Heart left ventricle (tissue), 16 donors: ENCODE measurements at regions of chr9 and their contacts with region 1.

Region 1: GRCh38 chr9:136849038-136849959 is at the start of gene PHPT1:
- DNase-seq: peak; percentile 99
- ATAC-seq: peak; percentile 84 to 94 (median 89)
- H3K4me3 ChIP-seq: peak within 1 kb of the TSS; percentile 63 to 93 (median 84)
- H3K27ac ChIP-seq: peak within 1 kb of the TSS; percentile 80 to 97 (median 92)
- H3K4me1 ChIP-seq: peaks cover 4 to 61% (median 27%) of the 10 kb centered on the region in 12 donors
- H3K27me3 ChIP-seq: peaks cover 0 to 28% (median 13%) of the 10 kb centered on the region in 9 donors
- CTCF ChIP-seq: no peak
- POLR2A ChIP-seq: peak; percentile 71 to 85
- total RNA-seq, gene PHPT1: 230 to 386 (median 266) TPM

Region 2: GRCh38 chr9:136885950-136886578 is 36.8 kb after region 1 on chr9 and contains the start of gene TRAF2:
- intact Hi-C with region 1: loop called in 3 of 10 experiments (anchors 1 to 2 kb)
- DNase-seq: peak; percentile 98 to 99 (median 99)
- ATAC-seq: peak; percentile 98 to 99 (median 98)
- H3K4me3 ChIP-seq: peak within 1 kb of the TSS; percentile 73 to 93 (median 84)
- H3K27ac ChIP-seq: peak within 1 kb of the TSS in 11 of 12 donors; percentile 73 to 93 (median 87)
- H3K4me1 ChIP-seq: peaks cover 5 to 56% (median 34%) of the 10 kb centered on the region in 12 donors
- H3K27me3 ChIP-seq: no peaks in the 10 kb centered on the region
- CTCF ChIP-seq: no peak
- POLR2A ChIP-seq: peak in 1 of 2 donors; percentile 85
- total RNA-seq, gene TRAF2: 6.3 to 14.7 (median 9.1) TPM

Region 3: DNA sequence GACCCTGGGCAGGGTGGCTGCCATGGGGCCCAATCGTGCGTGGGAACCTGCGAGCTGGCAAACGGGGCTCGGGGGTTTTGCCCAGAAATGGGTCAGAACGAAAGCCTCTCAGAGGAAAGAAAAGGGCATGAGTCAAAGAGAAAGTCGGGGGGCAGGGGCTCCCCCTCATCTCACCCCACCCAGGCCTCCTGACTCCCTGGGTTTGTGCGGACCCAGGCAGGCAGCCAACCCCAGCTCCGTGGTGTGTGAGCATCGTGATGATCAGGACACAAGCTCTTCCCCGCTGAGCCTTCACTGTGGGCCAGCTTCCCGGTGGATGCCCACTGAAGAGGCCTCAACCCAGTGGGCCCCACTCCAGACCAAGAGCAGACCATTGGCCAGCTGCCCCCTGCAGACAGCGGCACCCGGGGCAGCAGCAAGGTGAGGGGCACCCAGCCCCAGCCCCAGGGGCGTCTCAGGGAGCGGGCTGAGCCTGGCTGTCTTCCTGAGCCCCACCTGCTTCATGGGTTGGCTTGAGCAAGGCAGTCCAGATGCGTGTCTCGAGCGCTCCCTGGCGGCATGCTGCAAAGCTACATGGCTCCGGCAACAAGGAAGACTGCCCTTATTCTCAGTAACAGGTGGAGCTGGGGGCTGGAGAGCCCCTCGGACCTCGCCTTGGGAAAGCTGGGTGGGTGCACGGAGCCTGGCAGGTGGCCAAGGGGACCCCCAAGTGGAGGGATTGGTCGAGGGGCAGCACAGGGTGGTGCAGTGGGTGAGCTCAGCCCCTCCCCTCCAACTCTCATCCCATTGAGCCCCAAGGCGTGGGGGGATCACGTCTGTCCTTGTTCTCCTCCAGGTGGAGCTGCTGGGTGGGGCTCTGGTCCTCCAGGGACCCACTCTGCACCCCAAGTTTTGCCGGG is 185.8 kb after region 1 on chr9:
- intact Hi-C with region 1: loop called in 3 of 10 experiments (anchors 5 to 10 kb)
- DNase-seq: peak; percentile 79 to 93 (median 80)
- ATAC-seq: peak; percentile 64 to 82 (median 76)
- H3K4me3 ChIP-seq: peak overlapping the region in 2 of 12 donors; percentile 4 to 27
- H3K27ac ChIP-seq: peak overlapping the region in 2 of 12 donors; percentile 38 to 68
- H3K4me1 ChIP-seq: peaks cover 0 to 50% (median 11%) of the 10 kb centered on the region in 12 donors
- H3K27me3 ChIP-seq: no peaks in the 10 kb centered on the region
- CTCF ChIP-seq: peak; percentile 85 to 95 (median 90)
- POLR2A ChIP-seq: peak in 1 of 2 donors; percentile 9